ENCODE measurements at regions of chr10 and their contacts with region 1.

Region 1: GRCh38 chr10:111379534-111380187 is 302.8 kb downstream of the ADRA2A start:
- DNase-seq: no peak
- H3K4me3 Mint-ChIP-seq: no peak overlapping the region
- H3K27ac Mint-ChIP-seq: no peak overlapping the region
- H3K4me1 Mint-ChIP-seq: no peaks in the 10 kb centered on the region
- H3K27me3 Mint-ChIP-seq: no peaks in the 10 kb centered on the region

Region 2: DNA sequence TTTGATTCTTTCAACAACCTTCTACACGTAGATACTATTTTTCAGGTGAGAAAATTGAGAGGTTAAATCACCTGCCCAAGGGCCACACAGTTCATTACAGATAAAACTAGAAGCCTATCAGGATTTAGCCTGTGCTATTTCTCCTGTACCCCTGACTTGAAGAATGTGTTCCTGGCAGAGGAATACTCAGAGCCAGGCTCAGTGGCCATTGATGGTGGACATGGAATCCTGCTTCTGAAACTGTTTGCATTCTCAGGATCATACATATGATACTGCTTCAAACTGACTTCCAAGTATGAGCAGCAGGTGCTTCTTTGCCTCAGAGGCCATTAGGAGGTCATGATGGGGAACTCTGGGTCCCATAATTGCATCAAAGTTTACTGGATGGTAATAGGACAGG is 45.8 kb after region 1 on chr10:
- intact Hi-C with region 1: loop called (anchors 1 kb)
- DNase-seq: no peak
- H3K4me3 Mint-ChIP-seq: no peak overlapping the region
- H3K27ac Mint-ChIP-seq: no peak overlapping the region
- H3K4me1 Mint-ChIP-seq: no peaks in the 10 kb centered on the region
- H3K27me3 Mint-ChIP-seq: no peaks in the 10 kb centered on the region